HEK293 (cell line): ENCODE measurements at regions of chr10 and their contacts with region 1.

Region 1: DNA sequence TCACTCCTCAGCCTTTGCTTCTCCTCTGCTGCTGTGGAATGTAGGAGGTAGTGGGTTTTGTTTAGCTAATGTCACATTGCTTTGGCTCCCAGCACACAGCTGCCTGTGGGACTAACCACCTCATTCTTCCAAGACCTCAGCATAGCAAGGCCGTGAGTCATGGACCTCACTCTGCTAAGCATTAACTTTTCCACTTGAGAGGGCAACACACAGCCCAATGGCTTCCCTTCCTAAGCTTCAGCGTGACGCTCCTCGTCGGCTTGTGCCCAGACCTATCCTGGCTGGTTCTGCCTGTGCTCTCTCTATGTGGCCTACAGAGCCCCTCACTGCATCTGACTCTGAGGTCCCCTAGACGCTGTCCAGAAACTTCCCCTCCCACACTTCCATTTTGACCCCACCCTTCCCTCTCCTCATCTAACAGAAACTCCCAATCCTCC is 23.3 kb downstream of the MYOF start:
- H3K4me3 ChIP-seq: no peak overlapping the region
- H3K27ac ChIP-seq: peak overlapping the region; percentile 2; the same call in 1 of the 2 replicates
- H3K4me1 ChIP-seq: no peaks in the 10 kb centered on the region
- CTCF ChIP-seq: no peak

Region 2: GRCh38 chr10:93437088-93437945 is 21.5 kb before region 1 on chr10:
- CTCF ChIA-PET with region 1: interaction called, 4 read pairs
- POLR2A ChIA-PET with region 1: interaction called, 14 read pairs
- H3K4me3 ChIP-seq: peak overlapping the region; percentile 6; the same call in 1 of the 2 replicates
- H3K27ac ChIP-seq: 0 out of 2 replicates have a peak overlapping the region, but pooled peaks have one; percentile 8
- H3K4me1 ChIP-seq: peaks cover 10% of the 10 kb centered on the region
- CTCF ChIP-seq: no peak

Region 3: GRCh38 chr10:93471110-93471651 is 12.3 kb after region 1 on chr10:
- CTCF ChIA-PET with region 1: interaction called, 4 read pairs
- POLR2A ChIA-PET with region 1: interaction called, 12 read pairs
- H3K4me3 ChIP-seq: no peak overlapping the region
- H3K27ac ChIP-seq: no peak overlapping the region
- H3K4me1 ChIP-seq: no peaks in the 10 kb centered on the region
- CTCF ChIP-seq: no peak